ENCODE measurements at regions of chr6 and their contacts with region 1.

Region 1: GRCh38 chr6:116287689-116288282 is 8.1 kb upstream of the TSPYL1 start:
- DNase-seq: no peak
- ATAC-seq: peak; percentile 84
- H3K4me3 ChIP-seq: no peak overlapping the region
- H3K27ac ChIP-seq: no peak overlapping the region
- H3K4me1 ChIP-seq: peaks cover 3% of the 10 kb centered on the region; the same call in 1 of the 2 replicates
- H3K27me3 ChIP-seq: no peaks in the 10 kb centered on the region
- CTCF ChIP-seq: peak; percentile 80 to 85 (median 81); a peak in 5 of 6 replicates
- EP300 ChIP-seq: no peak
- POLR2A ChIP-seq: no peak
- RAD21 ChIP-seq: peak; percentile 96

Region 2: GRCh38 chr6:116307001-116307400 is 19.2 kb after region 1 on chr6:
- CTCF ChIA-PET with region 1: interaction called, 10 read pairs
- POLR2A ChIA-PET with region 1: no interaction called
- RAD21 ChIA-PET with region 1: no interaction called
- SMC1A ChIA-PET with region 1: interaction called, 4 read pairs
- in situ Hi-C with region 1: no loop called
- intact Hi-C with region 1: no loop called
- DNase-seq: no peak
- ATAC-seq: no peak
- H3K4me3 ChIP-seq: no peak overlapping the region
- H3K27ac ChIP-seq: no peak overlapping the region
- H3K4me1 ChIP-seq: no peaks in the 10 kb centered on the region
- H3K27me3 ChIP-seq: no peaks in the 10 kb centered on the region
- CTCF ChIP-seq: no peak
- EP300 ChIP-seq: no peak
- POLR2A ChIP-seq: no peak
- RAD21 ChIP-seq: no peak

Region 3: GRCh38 chr6:116363759-116364158 is 76.0 kb after region 1 on chr6:
- CTCF ChIA-PET with region 1: interaction called, 7 read pairs
- POLR2A ChIA-PET with region 1: no interaction called
- RAD21 ChIA-PET with region 1: interaction called, 10 read pairs
- SMC1A ChIA-PET with region 1: interaction called, 10 read pairs
- in situ Hi-C with region 1: no loop called
- intact Hi-C with region 1: no loop called
- DNase-seq: no peak
- ATAC-seq: 0 out of 3 replicates have a peak, but pooled peaks have one; percentile 34
- H3K4me3 ChIP-seq: no peak overlapping the region
- H3K27ac ChIP-seq: no peak overlapping the region
- H3K4me1 ChIP-seq: peaks cover 2% of the 10 kb centered on the region; the same call in 1 of the 2 replicates
- H3K27me3 ChIP-seq: no peaks in the 10 kb centered on the region
- CTCF ChIP-seq: no peak
- EP300 ChIP-seq: no peak
- POLR2A ChIP-seq: no peak
- RAD21 ChIP-seq: no peak

Region 4: GRCh38 chr6:116405138-116405537 is 117.4 kb after region 1 on chr6:
- CTCF ChIA-PET with region 1: interaction called, 54 read pairs
- POLR2A ChIA-PET with region 1: no interaction called
- RAD21 ChIA-PET with region 1: interaction called, 17 read pairs
- SMC1A ChIA-PET with region 1: interaction called, 25 read pairs
- in situ Hi-C with region 1: no loop called
- intact Hi-C with region 1: loop called (anchors 5 kb)
- DNase-seq: peak; percentile 82
- ATAC-seq: peak; percentile 67
- H3K4me3 ChIP-seq: peak overlapping the region; percentile 46; the same call in 1 of the 2 replicates
- H3K27ac ChIP-seq: peak overlapping the region; percentile 90
- H3K4me1 ChIP-seq: peaks cover 52% of the 10 kb centered on the region
- H3K27me3 ChIP-seq: no peaks in the 10 kb centered on the region
- CTCF ChIP-seq: no peak
- EP300 ChIP-seq: 0 out of 4 replicates have a peak, but pooled peaks have one; percentile 37 to 44
- POLR2A ChIP-seq: 0 out of 2 replicates have a peak, but pooled peaks have one; percentile 28
- RAD21 ChIP-seq: no peak

Region 5: DNA sequence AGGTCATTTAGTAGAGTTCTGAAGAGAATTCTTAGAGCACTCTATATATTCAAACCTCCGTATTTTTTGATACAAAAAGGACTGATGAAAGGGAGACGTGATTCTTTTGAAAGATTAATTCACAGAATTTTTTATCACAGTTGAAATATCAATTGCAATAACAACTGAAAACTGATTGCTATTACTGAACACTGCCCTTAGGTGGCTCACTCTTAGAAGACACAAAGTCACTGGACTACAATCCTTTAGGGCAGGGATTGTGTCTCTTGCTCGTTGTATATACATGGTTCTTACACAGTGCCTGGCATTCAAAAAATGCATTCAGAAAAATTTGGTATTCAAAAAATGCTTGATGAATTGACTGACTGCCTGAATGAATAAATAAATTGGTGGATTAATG is 156.3 kb after region 1 on chr6:
- CTCF ChIA-PET with region 1: interaction called, 17 read pairs
- POLR2A ChIA-PET with region 1: no interaction called
- RAD21 ChIA-PET with region 1: interaction called, 54 read pairs
- SMC1A ChIA-PET with region 1: interaction called, 21 read pairs
- in situ Hi-C with region 1: no loop called
- intact Hi-C with region 1: loop called (anchors 2 kb)
- DNase-seq: no peak
- ATAC-seq: peak; percentile 87
- H3K4me3 ChIP-seq: no peak overlapping the region
- H3K27ac ChIP-seq: no peak overlapping the region
- H3K4me1 ChIP-seq: no peaks in the 10 kb centered on the region
- H3K27me3 ChIP-seq: no peaks in the 10 kb centered on the region
- CTCF ChIP-seq: peak; percentile 59 to 68 (median 65)
- EP300 ChIP-seq: no peak
- POLR2A ChIP-seq: no peak
- RAD21 ChIP-seq: peak; percentile 59

Region 6: DNA sequence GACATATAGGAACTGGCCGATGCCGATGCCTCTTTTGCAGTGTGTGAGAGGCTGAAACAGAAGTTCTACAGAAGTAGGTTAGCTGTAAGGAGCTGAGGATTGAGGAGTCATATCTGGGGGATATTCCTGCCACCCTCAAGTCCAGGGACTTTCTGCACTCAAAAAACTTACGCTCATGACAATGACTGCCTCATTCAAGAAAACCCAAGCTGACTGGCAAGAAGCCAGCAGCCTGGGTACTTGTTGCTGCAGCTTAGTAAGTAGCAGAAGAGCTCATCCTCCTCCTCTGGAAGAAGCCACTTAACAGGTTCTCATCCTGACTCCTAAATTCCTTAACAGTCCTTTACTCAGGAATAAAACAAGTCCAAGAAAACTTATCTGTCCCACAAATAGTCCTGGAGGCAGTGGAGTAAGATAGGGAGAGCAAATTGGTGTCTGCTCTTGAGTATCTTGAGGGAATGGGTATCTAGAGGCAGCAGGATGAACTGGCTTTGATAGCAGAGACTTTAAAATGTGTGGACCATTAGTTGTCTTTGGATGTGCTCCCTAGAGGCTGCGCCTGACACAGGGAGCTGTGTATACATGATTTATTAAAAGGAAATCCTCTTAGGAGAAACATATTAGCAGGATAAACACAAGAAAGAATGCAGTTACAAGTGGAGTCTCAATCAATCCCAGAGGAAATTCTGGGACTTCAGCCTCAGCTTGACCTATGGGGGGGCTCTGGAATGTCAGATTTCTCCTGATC is 231.0 kb after region 1 on chr6:
- CTCF ChIA-PET with region 1: interaction called, 20 read pairs
- POLR2A ChIA-PET with region 1: no interaction called
- RAD21 ChIA-PET with region 1: interaction called, 4 read pairs
- SMC1A ChIA-PET with region 1: interaction called, 11 read pairs
- in situ Hi-C with region 1: no loop called
- intact Hi-C with region 1: no loop called
- DNase-seq: no peak
- ATAC-seq: no peak; the same call in 1 of the 3 replicates
- H3K4me3 ChIP-seq: no peak overlapping the region
- H3K27ac ChIP-seq: no peak overlapping the region
- H3K4me1 ChIP-seq: no peaks in the 10 kb centered on the region
- H3K27me3 ChIP-seq: no peaks in the 10 kb centered on the region
- CTCF ChIP-seq: no peak
- EP300 ChIP-seq: no peak
- POLR2A ChIP-seq: no peak
- RAD21 ChIP-seq: no peak

Region 7: DNA sequence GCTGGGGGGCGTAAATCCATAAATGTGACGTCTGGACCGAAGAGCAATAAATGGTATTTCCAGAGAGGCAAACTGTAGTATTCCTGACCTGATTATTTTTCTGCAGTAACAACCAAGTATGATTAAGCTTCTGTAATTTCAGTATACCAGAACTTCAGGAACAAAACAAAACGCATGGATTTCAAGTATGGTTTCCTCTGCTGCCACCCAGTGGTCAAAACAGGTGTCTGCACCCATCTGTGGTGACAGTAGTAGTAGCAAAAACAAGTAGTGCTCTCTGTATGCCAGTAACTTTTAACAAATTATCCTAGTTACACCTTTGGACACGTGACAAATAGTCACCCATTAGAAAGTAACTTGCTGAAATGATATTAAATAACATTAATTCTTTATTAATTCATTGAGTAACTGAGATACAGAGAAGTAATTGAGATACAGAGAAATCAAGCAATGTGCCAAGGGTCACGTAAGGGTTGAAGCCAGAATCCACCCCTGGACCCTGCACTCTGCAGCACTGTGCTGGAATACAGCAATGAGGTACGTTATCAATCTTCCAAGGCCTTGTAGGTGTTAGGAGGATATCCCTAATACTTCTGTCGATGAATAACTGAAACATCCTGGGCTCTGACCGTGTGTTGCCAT is 273.7 kb after region 1 on chr6:
- CTCF ChIA-PET with region 1: interaction called, 47 read pairs
- POLR2A ChIA-PET with region 1: no interaction called
- RAD21 ChIA-PET with region 1: interaction called, 19 read pairs
- SMC1A ChIA-PET with region 1: interaction called, 39 read pairs
- in situ Hi-C with region 1: no loop called
- intact Hi-C with region 1: loop called (anchors 2 kb)
- DNase-seq: no peak
- ATAC-seq: peak; percentile 87
- H3K4me3 ChIP-seq: no peak overlapping the region
- H3K27ac ChIP-seq: no peak overlapping the region
- H3K4me1 ChIP-seq: no peaks in the 10 kb centered on the region
- H3K27me3 ChIP-seq: no peaks in the 10 kb centered on the region; a peak in 1 of 4 replicates
- CTCF ChIP-seq: peak; percentile 84 to 93 (median 88)
- EP300 ChIP-seq: no peak
- POLR2A ChIP-seq: no peak
- RAD21 ChIP-seq: peak; percentile 81